Activated CD4-positive, alpha-beta memory T cell treated with anti-CD3 and anti-CD28 coated beads, Interleukin-2, amount 10 ng/mL, durations not matched to agents 7 days and 5 days (primary cell): ENCODE measurements at regions of chr12 and their contacts with region 1.

Region 1: DNA sequence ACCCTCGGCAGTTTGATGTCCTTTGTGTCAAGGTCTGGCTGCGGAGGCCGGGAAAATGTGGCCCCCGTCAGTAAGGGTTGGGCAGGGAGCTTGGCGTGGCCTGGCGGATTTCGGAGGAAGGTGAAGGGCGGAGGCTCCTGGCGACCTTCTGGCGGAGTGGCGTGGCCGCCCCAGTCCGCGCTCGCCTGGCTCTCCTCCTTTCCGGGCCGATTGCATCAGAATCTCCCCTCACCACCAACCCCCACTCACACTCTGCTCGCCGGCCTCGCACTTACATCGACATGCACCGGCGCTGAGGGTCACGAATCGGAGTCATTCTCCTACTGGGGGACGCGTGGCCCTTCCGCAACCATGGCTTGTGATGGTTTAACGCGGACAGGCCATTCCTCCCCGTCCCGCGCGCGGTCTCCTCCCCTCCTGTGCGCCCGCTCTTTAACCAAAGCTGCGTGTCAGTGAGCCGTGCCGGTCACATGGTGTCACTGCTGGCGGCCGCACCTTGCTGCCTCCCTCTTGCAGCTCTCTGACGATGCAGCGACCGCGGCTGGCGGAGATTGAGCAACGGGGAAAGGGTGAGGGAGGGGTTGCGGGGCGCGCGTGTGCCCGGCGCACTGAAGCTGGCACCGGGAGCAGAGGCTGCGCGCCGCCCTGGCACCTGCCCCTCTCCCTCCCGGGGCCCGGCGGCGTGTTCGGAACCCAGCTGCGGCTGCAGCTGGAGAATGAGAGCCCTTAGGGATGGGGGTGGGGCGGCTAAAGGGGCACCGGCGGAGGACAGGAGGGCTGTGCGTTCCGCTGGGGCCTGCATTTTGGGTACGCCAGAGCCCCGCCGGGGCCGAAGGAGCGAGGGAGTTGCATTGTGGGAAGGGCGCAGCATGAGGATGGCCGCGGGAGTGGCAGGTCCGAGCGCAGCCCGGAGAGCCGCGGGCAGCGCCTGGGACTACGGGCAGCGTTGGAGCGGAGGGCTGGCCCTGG is at the start of gene SLC38A1:
- DNase-seq: peak; percentile 92
- H3K4me3 Mint-ChIP-seq: no peak within 1 kb of the TSS
- H3K27ac Mint-ChIP-seq: no peak within 1 kb of the TSS
- H3K4me1 Mint-ChIP-seq: peaks cover 28% of the 10 kb centered on the region
- H3K27me3 Mint-ChIP-seq: no peaks in the 10 kb centered on the region
- total RNA-seq, gene SLC38A1: 209 to 214 TPM

Region 2: GRCh38 chr12:45433441-45433868 is 835.4 kb before region 1 on chr12:
- CTCF ChIA-PET with region 1: no interaction called
- POLR2A ChIA-PET with region 1: no interaction called
- DNase-seq: no peak
- H3K4me3 Mint-ChIP-seq: no peak overlapping the region
- H3K27ac Mint-ChIP-seq: no peak overlapping the region
- H3K4me1 Mint-ChIP-seq: peaks cover 5% of the 10 kb centered on the region
- H3K27me3 Mint-ChIP-seq: no peaks in the 10 kb centered on the region

Region 3: DNA sequence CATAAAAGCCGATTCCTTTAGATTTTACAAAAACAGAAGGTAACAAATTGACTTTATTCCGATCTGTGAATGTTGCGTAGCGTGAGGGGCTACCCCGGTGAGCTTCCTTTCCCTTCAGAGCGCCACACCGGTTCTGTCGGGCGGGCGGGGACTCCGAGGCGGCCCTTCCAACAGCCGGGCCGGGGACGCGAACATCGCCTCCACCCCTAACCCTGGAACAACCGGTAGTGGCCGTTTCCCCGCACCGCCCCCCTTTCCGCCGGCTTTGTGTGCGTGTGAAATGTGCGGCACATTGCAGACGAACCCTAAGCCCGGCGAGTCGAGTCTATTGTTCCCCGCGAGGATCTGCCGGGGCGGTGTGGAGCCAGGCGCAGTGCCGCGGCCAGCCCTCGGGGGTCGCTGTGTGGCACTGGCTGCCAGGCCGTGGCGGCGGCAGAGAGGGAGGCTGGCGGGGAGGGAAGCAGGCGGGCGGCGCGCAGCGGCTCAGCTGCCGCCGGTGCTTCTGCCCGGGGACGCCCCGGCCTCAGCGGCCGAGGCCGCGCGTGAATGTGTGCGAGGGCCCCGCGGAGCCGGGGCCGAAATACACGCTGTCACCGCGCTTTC is 540.1 kb before region 1 on chr12:
- CTCF ChIA-PET with region 1: interaction called, 3 read pairs
- POLR2A ChIA-PET with region 1: interaction called, 44 read pairs
- DNase-seq: peak; percentile 98
- H3K4me3 Mint-ChIP-seq: peak overlapping the region; percentile 93
- H3K27ac Mint-ChIP-seq: peak overlapping the region; percentile 100
- H3K4me1 Mint-ChIP-seq: peaks cover 23% of the 10 kb centered on the region
- H3K27me3 Mint-ChIP-seq: no peaks in the 10 kb centered on the region

Region 4: DNA sequence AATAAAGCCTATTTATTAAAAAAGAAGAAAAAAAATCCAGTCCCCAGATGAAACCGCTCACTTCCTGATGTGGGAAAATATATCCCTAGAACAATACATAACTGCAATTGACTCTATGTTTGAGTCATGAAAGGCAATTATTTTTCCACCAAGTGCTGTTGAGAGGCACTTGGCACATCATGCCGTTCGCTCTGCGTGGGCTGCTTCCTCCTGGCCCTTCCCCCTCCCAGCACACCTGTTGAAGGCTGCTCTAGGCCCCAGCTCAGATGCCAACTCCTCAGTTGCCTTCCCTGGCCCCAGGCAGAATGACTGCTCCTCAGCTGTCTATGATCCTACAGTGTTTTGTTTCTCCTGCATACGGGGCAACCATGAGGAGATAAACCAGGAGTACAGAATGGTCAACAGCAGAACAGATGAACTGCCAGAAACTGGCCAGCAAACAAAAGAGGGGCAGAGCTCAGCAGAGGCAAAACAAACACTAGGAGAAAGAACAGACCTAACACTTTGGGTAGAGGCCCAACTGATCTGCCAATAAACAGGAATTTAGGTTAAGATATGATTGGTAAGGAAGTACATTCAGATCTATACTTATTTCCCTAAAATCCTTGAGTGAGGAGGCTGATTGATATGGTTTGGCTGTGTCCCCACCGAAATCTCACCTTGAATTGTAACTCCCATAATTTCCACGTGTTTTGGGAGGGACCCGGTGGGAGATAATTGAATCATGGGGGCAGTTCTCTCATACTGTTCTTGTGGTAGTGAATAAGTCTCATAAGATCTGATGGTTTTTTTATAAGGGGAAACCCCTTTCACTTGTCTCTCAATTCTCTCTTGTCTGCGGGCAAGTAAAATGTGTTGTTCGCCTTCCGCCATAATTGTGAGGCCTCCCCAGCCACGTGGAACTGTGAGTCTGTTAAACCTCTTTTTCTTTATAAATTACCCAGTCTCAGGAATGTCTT is 58.7 kb before region 1 on chr12:
- CTCF ChIA-PET with region 1: interaction called, 40 read pairs
- POLR2A ChIA-PET with region 1: interaction called, 449 read pairs
- DNase-seq: peak; percentile 37
- H3K4me3 Mint-ChIP-seq: peak overlapping the region; percentile 9
- H3K27ac Mint-ChIP-seq: peak overlapping the region; percentile 73
- H3K4me1 Mint-ChIP-seq: peaks cover 70% of the 10 kb centered on the region
- H3K27me3 Mint-ChIP-seq: no peaks in the 10 kb centered on the region

Region 5: DNA sequence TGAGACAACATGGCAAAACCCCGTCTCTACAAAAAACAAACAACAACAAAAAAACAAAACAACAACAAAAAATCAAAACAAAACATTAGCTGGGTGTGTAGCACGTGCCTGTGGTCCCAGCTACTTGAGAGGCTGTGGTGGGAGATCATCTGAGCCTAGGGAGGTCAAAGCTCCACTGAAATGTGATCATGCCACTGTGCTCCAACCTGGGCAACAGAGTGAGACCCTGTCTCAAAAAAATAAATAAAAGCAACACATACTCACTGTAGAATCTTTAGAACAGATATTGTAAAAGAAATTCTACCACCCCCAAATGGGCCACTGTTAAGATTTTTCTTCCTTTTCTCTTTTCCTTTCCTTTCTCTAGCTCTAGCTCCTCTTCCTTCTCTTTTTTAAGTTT is 26.3 kb before region 1 on chr12:
- CTCF ChIA-PET with region 1: interaction called, 3 read pairs
- POLR2A ChIA-PET with region 1: interaction called, 12 read pairs
- DNase-seq: no peak
- H3K4me3 Mint-ChIP-seq: no peak overlapping the region
- H3K27ac Mint-ChIP-seq: no peak overlapping the region
- H3K4me1 Mint-ChIP-seq: peaks cover 60% of the 10 kb centered on the region
- H3K27me3 Mint-ChIP-seq: no peaks in the 10 kb centered on the region

Region 6: DNA sequence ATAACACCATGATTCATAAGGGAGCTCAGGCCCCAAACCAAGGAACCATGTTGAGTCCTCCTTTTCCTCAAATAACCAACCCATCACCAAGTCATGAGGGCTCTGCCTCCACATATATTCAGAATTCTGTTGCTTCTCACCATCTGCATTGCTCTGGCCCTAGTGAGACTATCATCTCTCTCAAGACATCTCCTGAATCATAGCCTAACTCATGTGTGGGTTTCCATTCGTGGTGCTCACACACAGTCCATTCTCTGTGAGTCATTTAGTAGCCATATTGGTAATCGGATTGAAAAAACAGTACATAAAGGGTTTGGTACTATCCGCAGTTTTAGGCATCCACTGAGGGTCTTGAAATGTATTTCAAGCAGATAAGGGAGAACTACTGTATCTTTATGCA is 108.8 kb after region 1 on chr12:
- CTCF ChIA-PET with region 1: no interaction called
- POLR2A ChIA-PET with region 1: interaction called, 101 read pairs
- DNase-seq: no peak
- H3K4me3 Mint-ChIP-seq: no peak overlapping the region
- H3K27ac Mint-ChIP-seq: no peak overlapping the region
- H3K4me1 Mint-ChIP-seq: peaks cover 51% of the 10 kb centered on the region
- H3K27me3 Mint-ChIP-seq: no peaks in the 10 kb centered on the region

Region 7: GRCh38 chr12:46523863-46524770 is 255.2 kb after region 1 on chr12:
- CTCF ChIA-PET with region 1: no interaction called
- POLR2A ChIA-PET with region 1: interaction called, 33 read pairs
- DNase-seq: peak; percentile 60
- H3K4me3 Mint-ChIP-seq: peak overlapping the region; percentile 72
- H3K27ac Mint-ChIP-seq: peak overlapping the region; percentile 93
- H3K4me1 Mint-ChIP-seq: peaks cover 55% of the 10 kb centered on the region
- H3K27me3 Mint-ChIP-seq: no peaks in the 10 kb centered on the region

Region 8: DNA sequence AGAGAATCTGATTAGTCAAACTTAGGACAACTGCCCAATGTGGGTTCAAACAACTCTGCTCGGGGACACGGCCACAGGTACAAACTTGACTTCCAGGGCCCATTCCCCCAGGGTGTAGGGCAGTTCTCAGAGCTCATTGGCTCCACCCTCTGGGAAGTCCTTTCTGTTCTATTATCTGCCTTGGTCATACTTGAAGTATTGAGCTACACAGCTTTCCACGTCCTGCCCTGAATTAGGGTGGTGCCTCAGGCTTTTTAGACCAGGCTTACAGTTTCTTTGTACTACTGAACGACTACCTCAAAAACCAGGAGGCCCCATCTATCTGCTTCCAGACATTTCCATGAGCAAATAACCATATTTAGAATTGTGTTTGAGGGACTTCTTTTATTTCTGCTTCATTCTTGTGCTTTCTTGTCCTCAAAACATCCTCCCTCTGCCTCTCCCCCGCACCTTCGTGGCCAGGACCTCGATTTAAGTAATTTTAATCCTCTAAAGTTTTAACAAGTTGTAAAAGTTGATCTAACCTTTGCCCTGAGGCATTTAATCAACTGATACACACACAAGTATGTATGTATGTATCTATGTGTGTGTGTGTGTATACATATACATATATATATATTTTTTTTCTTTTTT is 1092.6 kb after region 1 on chr12:
- CTCF ChIA-PET with region 1: no interaction called
- POLR2A ChIA-PET with region 1: interaction called, 12 read pairs
- DNase-seq: peak; percentile 68
- H3K4me3 Mint-ChIP-seq: peak overlapping the region; percentile 76
- H3K27ac Mint-ChIP-seq: peak overlapping the region; percentile 100
- H3K4me1 Mint-ChIP-seq: peaks cover 60% of the 10 kb centered on the region
- H3K27me3 Mint-ChIP-seq: no peaks in the 10 kb centered on the region